ENCODE measurements at regions of chr15 and their contacts with region 1.

Region 1: GRCh38 chr15:88904624-88905327 is 8.4 kb downstream of the MFGE8 start:
- DNase-seq: peak; percentile 78
- H3K27ac ChIP-seq: peak overlapping the region; percentile 80
- CTCF ChIP-seq: peak; percentile 99

Region 2: GRCh38 chr15:89017370-89018066 is 112.7 kb after region 1 on chr15:
- CTCF ChIA-PET with region 1: interaction called, 27 read pairs
- POLR2A ChIA-PET with region 1: interaction called, 4 read pairs
- DNase-seq: peak; percentile 84
- H3K27ac ChIP-seq: peak overlapping the region; percentile 73
- CTCF ChIP-seq: peak; percentile 95

Region 3: GRCh38 chr15:89177633-89178306 is 273.0 kb after region 1 on chr15:
- CTCF ChIA-PET with region 1: interaction called, 11 read pairs
- POLR2A ChIA-PET with region 1: interaction called, 3 read pairs
- DNase-seq: peak; percentile 55
- H3K27ac ChIP-seq: no peak overlapping the region
- CTCF ChIP-seq: peak; percentile 95

Measured in RWPE1 (cell line).